Activated CD8-positive, alpha-beta T cell treated with anti-CD3 and anti-CD28 coated beads, Interleukin-2, amount 10 ng/mL, durations not matched to agents 7 days and 5 days (primary cell): ENCODE measurements at regions of chr1 and their contacts with region 1.

Region 1: DNA sequence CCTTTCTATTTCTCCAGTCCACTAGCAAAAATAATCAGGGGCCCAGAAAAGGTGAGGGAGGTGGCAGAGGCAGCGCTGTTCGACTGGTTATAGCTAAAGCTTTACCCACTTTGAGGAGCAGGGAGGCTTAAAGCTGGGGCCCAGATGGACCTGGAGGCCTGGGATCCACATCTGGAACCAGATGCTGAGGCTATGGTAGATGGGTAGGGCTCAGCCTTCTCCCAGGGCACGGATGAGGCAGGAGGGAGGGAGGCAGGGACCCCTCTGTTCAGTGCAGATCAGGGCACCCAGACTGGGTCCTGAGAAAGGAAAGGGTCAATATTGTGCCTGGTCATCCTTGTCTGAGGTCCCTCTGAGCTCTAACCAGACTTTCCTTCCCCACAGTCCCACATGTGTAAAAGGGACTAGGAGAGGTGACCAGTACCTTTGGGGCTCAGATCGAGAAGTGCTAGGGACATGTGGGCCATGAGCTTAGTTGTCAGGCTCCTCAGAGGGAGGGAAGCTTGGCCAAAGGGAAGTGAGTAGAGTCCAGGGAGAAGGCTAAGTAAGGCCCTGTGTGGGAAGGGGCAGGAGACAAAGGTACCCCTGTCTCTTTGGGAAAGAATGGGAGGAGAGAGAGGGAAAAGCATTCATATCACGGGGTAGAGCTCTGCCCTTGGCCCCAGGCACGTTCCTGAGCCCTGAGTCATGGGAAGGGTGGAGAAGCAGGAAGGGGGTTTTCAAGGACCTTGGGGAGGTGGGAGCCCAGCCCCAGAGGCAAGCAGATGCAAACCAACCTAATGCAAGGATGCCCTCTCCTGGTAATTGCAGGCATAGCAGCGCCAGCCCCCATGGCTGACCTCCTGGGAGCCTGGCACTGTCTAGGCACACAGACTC is 15.4 kb downstream of the LMNA start:
- DNase-seq: peak; percentile 83
- ATAC-seq: no peak
- H3K4me3 Mint-ChIP-seq: no peak overlapping the region
- H3K27ac Mint-ChIP-seq: no peak overlapping the region
- H3K4me1 Mint-ChIP-seq: peaks cover 51% of the 10 kb centered on the region
- H3K27me3 Mint-ChIP-seq: peaks cover 7% of the 10 kb centered on the region

Region 2: DNA sequence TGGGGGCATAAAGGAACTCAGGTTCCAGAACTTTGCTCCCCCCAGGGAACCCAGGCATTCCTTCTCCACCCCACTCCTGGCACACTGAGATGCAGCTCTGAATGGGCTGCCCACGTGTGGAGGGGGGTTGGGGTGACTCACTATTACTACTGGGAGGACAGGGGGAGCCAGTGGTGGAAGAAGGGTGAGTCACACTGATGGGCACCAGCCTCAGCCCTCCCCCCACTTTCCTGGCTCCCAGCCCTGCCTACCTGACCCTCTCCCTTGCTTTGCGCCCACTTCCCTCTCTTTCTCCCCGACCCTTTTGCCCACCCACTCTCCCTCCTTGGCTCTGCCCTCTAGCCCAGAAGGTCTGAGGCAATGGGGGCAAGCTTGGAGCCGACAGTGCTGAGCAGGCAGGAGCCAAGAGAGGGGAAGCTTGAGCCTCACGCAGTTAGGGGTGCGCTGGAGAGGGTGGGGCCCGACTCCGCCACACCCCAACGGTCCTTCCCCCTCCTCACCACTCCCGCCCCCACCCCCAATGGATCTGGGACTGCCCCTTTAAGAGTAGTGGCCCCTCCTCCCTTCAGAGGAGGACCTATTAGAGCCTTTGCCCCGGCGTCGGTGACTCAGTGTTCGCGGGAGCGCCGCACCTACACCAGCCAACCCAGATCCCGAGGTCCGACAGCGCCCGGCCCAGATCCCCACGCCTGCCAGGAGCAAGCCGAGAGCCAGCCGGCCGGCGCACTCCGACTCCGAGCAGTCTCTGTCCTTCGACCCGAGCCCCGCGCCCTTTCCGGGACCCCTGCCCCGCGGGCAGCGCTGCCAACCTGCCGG is 15.6 kb before region 1 on chr1 and contains the start of gene LMNA:
- CTCF ChIA-PET with region 1: interaction called, 76 read pairs
- POLR2A ChIA-PET with region 1: interaction called, 6 read pairs
- DNase-seq: peak; percentile 70
- ATAC-seq: peak; percentile 83
- H3K4me3 Mint-ChIP-seq: peak within 1 kb of the TSS; percentile 80
- H3K27ac Mint-ChIP-seq: no peak within 1 kb of the TSS
- H3K4me1 Mint-ChIP-seq: peaks cover 26% of the 10 kb centered on the region
- H3K27me3 Mint-ChIP-seq: peaks cover 58% of the 10 kb centered on the region
- total RNA-seq, gene LMNA: 8.5 to 10.3 TPM

Region 3: DNA sequence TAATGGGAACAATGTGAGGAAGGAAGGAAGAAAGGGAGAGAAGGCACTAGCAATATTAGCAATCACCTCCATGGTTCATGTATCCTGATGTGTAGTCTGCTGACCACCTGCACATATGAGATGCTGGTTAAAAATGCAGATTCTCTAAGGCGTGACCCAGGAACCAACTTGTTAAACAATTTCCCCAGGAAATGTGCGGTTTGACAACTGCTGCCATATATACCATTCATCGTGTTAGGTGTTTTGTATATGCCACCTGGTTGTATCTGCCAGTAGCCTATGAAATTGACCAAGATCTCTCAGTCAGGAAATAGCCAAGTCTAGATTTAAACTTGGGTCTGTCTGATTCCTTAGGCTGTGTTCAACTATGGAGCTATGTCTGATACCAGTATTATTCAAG is 27.6 kb after region 1 on chr1:
- CTCF ChIA-PET with region 1: no interaction called
- POLR2A ChIA-PET with region 1: no interaction called
- DNase-seq: no peak
- ATAC-seq: no peak
- H3K4me3 Mint-ChIP-seq: no peak overlapping the region
- H3K27ac Mint-ChIP-seq: peak overlapping the region; percentile 13
- H3K4me1 Mint-ChIP-seq: peaks cover 85% of the 10 kb centered on the region
- H3K27me3 Mint-ChIP-seq: no peaks in the 10 kb centered on the region